ENCODE measurements at regions of chr7 and their contacts with region 1.

Region 1: DNA sequence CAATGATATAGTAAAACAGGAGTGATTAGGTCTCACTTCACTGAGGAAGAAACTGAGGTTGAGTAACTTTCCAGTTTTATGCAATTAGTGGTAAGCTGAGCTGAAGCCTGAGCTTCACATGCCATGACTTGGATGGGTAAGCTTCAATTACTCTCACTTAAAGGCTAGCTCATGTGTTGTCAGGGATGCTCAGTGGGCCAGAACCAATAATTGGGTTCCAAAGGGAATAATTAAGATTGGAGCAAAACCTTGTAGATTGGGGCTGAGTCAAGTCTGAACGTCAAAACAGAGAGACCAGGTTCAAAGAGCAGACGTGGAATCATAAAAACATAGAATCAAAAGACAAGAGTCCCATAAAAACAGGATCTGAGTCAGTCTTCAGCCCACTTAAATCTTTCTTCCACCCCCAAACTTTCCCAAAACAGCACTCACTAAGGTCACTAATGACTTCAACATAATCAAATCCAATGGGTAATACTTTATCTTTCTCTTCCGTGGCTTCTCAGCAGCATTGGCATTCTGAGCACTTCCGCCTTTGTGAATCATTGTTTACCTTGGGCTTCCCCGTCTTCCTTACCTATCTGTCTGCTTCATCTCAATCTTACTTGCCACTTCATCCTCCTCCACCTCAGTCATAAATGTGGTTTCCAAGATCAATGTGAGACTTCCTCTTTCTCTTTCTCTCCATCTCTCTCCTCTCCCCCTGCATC is 23.0 kb upstream of the EGFR start:
- DNase-seq: peak; percentile 71 to 99
- H3K4me3 ChIP-seq: peak overlapping the region; percentile 13
- H3K27ac ChIP-seq: peak overlapping the region; percentile 89
- H3K4me1 ChIP-seq: peaks cover 56% of the 10 kb centered on the region
- H3K27me3 ChIP-seq: no peaks in the 10 kb centered on the region
- CTCF ChIP-seq: peak; percentile 9; the same call in 1 of the 2 replicates

Region 2: GRCh38 chr7:54961391-54961790 is 34.4 kb before region 1 on chr7:
- CTCF ChIA-PET with region 1: interaction called, 6 read pairs
- POLR2A ChIA-PET with region 1: interaction called, 6 read pairs
- intact Hi-C with region 1: loop called (anchors 1 kb)
- DNase-seq: peak; percentile 88 to 98
- H3K4me3 ChIP-seq: peak overlapping the region; percentile 12; the same call in 1 of the 2 replicates
- H3K27ac ChIP-seq: peak overlapping the region; percentile 71
- H3K4me1 ChIP-seq: peaks cover 34% of the 10 kb centered on the region
- H3K27me3 ChIP-seq: no peaks in the 10 kb centered on the region
- CTCF ChIP-seq: no peak

Region 3: GRCh38 chr7:55138663-55139062 is 142.9 kb after region 1 on chr7:
- CTCF ChIA-PET with region 1: no interaction called
- POLR2A ChIA-PET with region 1: no interaction called
- intact Hi-C with region 1: no loop called
- DNase-seq: no peak
- H3K4me3 ChIP-seq: no peak overlapping the region
- H3K27ac ChIP-seq: 0 out of 2 replicates have a peak overlapping the region, but pooled peaks have one; percentile 1
- H3K4me1 ChIP-seq: peaks cover 24% of the 10 kb centered on the region
- H3K27me3 ChIP-seq: no peaks in the 10 kb centered on the region
- CTCF ChIP-seq: no peak